ENCODE measurements at regions of chr1 and their contacts with region 1.

Region 1: DNA sequence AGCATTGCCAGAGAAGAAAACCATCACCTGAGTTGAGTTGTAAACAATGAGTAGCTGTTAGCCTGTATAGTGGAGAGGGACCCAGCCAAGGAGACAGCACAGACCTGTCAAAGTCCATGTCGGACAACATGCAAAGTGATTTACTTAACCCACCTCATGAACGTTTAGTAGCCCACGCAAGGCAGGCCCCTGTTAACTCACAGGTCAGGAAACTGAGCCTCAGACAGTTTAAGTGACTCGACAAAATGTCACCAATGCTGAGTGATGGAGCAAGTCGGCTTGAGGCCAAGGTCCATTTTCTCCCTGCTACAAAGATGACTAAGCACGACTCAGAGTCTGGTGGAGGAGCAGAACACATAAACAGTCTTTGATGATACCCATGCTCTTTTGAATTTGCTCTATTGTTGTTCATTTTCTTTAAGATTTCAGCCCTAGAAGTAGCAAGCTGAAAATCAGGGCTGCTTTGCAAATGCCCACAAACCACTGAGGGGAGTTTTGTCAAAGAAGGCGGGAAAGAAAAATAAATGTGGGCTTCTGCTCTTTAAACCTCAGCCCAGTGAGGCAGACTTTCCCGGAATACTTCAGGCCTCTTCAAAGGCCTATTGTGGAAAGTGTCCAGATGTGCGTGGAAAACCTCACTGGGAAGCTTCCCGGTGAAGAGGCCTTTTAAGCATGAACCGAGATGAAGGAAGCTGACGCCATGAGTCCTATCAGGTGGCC is 83.8 kb upstream of the HOOK1 start:
- DNase-seq: peak; percentile 95
- H3K4me3 ChIP-seq: no peak overlapping the region
- H3K27ac ChIP-seq: peak overlapping the region; percentile 93
- H3K27me3 ChIP-seq: no peaks in the 10 kb centered on the region
- CTCF ChIP-seq: no peak

Region 2: GRCh38 chr1:59296358-59297256 is 434.3 kb before region 1 on chr1 and contains the start of gene FGGY:
- CTCF ChIA-PET with region 1: no interaction called
- POLR2A ChIA-PET with region 1: interaction called, 14 read pairs
- DNase-seq: peak; percentile 98
- H3K4me3 ChIP-seq: peak within 1 kb of the TSS; percentile 69
- H3K27ac ChIP-seq: peak within 1 kb of the TSS; percentile 84
- H3K27me3 ChIP-seq: no peaks in the 10 kb centered on the region
- CTCF ChIP-seq: no peak
- polyA plus RNA-seq, gene FGGY: 11.8 and 12.6 TPM in 2 replicates

Region 3: DNA sequence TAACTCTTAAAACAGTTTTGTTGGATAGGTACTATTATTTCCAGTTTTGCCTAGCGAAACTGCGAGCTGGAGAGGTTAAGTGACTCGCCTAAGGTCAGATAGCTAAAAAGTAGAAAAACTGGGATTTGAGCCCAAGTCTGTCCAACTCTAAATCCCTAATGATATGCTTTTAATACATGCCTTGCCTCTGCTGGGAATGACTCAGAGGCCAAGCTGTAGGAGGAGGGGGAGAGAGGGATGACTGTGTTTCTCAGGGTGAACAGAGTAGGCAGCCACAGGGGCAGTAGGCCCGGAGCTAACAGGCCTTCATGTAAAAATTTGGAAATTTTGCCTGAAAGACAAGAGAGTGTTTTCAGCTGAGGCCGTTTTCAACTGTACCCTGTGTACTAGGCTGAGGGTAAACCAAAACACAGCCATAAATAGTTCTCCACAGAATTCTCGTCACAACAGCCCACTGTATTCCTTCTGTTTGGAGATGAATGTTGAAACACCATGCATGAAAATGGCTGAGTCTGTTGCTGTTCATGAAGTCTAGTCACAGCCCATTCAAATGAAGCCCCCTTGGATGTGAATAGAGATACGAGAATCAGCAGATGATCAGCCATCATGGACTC is 23.6 kb before region 1 on chr1:
- CTCF ChIA-PET with region 1: no interaction called
- POLR2A ChIA-PET with region 1: interaction called, 38 read pairs
- DNase-seq: peak; percentile 89
- H3K4me3 ChIP-seq: no peak overlapping the region
- H3K27ac ChIP-seq: peak overlapping the region; percentile 87
- H3K27me3 ChIP-seq: no peaks in the 10 kb centered on the region
- CTCF ChIP-seq: no peak

Region 4: GRCh38 chr1:59759156-59759925 is 28.4 kb after region 1 on chr1:
- CTCF ChIA-PET with region 1: interaction called, 5 read pairs
- POLR2A ChIA-PET with region 1: interaction called, 10 read pairs
- DNase-seq: peak; percentile 77
- H3K4me3 ChIP-seq: no peak overlapping the region
- H3K27ac ChIP-seq: no peak overlapping the region
- H3K27me3 ChIP-seq: no peaks in the 10 kb centered on the region
- CTCF ChIP-seq: peak; percentile 98

Region 5: GRCh38 chr1:59776960-59777852 is 46.3 kb after region 1 on chr1:
- CTCF ChIA-PET with region 1: no interaction called
- POLR2A ChIA-PET with region 1: no interaction called
- DNase-seq: no peak
- H3K4me3 ChIP-seq: no peak overlapping the region
- H3K27ac ChIP-seq: peak overlapping the region; percentile 73
- H3K27me3 ChIP-seq: no peaks in the 10 kb centered on the region
- CTCF ChIP-seq: peak; percentile 29; the same call in 1 of the 2 replicates

Measured in AG04450 (cell line).